Activated CD4-positive, alpha-beta T cell treated with anti-CD3 and anti-CD28 coated beads, Interleukin-2, amount 10 ng/mL, durations not matched to agents 24 days and 14 days (primary cell): ENCODE measurements at regions of chr6 and their contacts with region 1.

Region 1: GRCh38 chr6:108798670-108799353 is 49.4 kb upstream of the ARMC2 start:
- DNase-seq: peak; percentile 88
- H3K4me3 Mint-ChIP-seq: peak overlapping the region; percentile 61
- H3K27ac Mint-ChIP-seq: peak overlapping the region; percentile 78
- H3K4me1 Mint-ChIP-seq: peaks cover 33% of the 10 kb centered on the region
- H3K27me3 Mint-ChIP-seq: peaks cover 6% of the 10 kb centered on the region

Region 2: GRCh38 chr6:108739453-108740330 is 59.1 kb before region 1 on chr6:
- intact Hi-C with region 1: no loop called
- DNase-seq: no peak
- H3K4me3 Mint-ChIP-seq: no peak overlapping the region
- H3K27ac Mint-ChIP-seq: no peak overlapping the region
- H3K4me1 Mint-ChIP-seq: peaks cover 4% of the 10 kb centered on the region
- H3K27me3 Mint-ChIP-seq: peaks cover 20% of the 10 kb centered on the region

Region 3: DNA sequence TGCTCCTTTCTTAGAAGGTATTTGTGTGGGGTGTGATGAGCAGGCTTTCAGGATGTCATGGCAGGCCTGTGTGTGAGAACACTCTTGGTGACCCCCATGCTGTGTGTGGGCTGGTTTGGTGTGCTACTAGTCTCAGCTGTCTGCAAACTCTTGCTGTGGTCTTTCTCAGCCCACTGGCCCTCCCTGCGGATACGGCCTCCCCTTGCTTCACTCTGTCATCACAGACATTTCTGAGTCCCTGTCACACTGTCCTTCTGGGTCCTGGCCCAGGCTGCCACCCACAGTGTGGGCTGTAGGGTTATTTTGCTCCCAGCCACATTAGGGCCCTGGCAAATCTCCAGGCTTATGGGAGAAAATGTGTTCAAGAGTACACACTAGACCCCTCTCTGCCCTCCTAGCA is 10.4 kb after region 1 on chr6:
- intact Hi-C with region 1: no loop called
- DNase-seq: no peak
- H3K4me3 Mint-ChIP-seq: no peak overlapping the region
- H3K27ac Mint-ChIP-seq: no peak overlapping the region
- H3K4me1 Mint-ChIP-seq: peaks cover 10% of the 10 kb centered on the region
- H3K27me3 Mint-ChIP-seq: peaks cover 6% of the 10 kb centered on the region

Region 4: GRCh38 chr6:109308018-109308492 is 509.2 kb after region 1 on chr6:
- intact Hi-C with region 1: loop called (anchors 10 kb)
- DNase-seq: no peak
- H3K4me3 Mint-ChIP-seq: no peak overlapping the region
- H3K27ac Mint-ChIP-seq: no peak overlapping the region
- H3K4me1 Mint-ChIP-seq: peaks cover 17% of the 10 kb centered on the region
- H3K27me3 Mint-ChIP-seq: no peaks in the 10 kb centered on the region